Activated CD4-positive, alpha-beta memory T cell treated with anti-CD3 and anti-CD28 coated beads, Interleukin-2, amount 10 ng/mL, durations not matched to agents 7 days and 5 days (primary cell): ENCODE measurements at regions of chr17 and their contacts with region 1.

Region 1: DNA sequence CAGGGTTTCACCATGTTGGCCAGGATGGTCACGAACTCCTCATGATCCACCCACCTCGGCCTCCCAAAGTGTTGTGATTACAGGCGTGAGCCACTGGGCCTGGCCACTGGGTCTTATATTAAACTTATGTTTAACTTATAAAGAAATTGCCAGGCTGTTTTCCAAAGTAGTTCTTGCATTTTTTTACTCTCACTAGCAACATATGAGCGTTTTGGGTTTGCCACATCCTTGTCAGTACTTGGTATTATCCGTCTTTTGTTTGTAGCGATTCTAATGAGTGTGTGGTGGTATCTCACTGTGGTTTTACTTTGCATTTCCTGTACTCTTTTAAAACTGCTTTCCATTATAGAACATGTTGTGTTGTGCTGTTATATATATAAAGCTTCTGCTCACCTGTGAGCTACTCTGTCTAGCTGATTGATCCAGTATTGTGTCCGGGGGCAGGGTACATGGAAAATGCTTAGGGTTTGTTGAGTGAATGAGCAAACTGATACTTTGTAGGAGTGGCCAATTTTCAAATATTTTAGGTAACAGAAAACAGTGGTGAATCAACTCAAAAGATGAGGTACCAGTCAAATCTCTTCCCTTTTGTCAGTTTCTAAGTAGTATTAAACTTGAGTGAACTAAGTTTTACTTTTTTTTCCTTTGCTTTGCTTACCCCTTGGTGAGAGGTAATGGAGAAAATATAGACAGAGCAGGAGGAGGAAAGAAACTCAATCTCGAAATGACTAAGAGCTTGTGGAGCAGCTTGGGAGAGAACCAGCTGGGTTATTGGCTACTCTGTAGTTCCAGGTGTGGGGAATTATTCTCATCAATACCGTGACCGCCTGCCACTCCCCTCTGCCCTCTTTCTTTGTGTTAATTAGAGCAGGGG is 75.8 kb downstream of the PITPNC1 start:
- DNase-seq: peak; percentile 39
- H3K4me3 Mint-ChIP-seq: peak overlapping the region; percentile 59
- H3K27ac Mint-ChIP-seq: peak overlapping the region; percentile 95
- H3K4me1 Mint-ChIP-seq: peaks cover 62% of the 10 kb centered on the region
- H3K27me3 Mint-ChIP-seq: peaks cover 2% of the 10 kb centered on the region

Region 2: DNA sequence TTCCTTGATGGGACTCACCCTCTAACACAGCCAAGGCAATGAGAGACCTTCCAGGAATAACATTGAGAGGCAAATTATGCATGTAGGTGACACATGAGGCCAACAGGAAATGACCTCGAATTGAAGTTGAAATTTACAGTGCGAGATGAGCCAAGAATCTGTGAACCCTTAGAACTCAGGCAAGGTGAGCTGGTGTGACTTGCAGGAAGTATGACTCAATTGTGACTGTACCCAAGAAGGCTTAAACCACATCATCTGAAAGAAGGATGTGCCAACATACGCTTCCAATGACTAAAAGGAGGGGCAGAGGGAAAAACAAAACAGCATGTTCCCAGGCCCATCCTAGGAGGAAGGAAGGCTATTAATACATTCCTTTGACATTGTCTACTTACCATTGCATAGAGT is 31.0 kb before region 1 on chr17:
- CTCF ChIA-PET with region 1: interaction called, 3 read pairs
- POLR2A ChIA-PET with region 1: interaction called, 10 read pairs
- DNase-seq: peak; percentile 64
- H3K4me3 Mint-ChIP-seq: no peak overlapping the region
- H3K27ac Mint-ChIP-seq: peak overlapping the region; percentile 83
- H3K4me1 Mint-ChIP-seq: peaks cover 51% of the 10 kb centered on the region
- H3K27me3 Mint-ChIP-seq: no peaks in the 10 kb centered on the region

Region 3: GRCh38 chr17:67431249-67432048 is 21.5 kb before region 1 on chr17:
- CTCF ChIA-PET with region 1: interaction called, 19 read pairs
- POLR2A ChIA-PET with region 1: interaction called, 61 read pairs
- DNase-seq: no peak
- H3K4me3 Mint-ChIP-seq: no peak overlapping the region
- H3K27ac Mint-ChIP-seq: peak overlapping the region; percentile 11
- H3K4me1 Mint-ChIP-seq: peaks cover 55% of the 10 kb centered on the region
- H3K27me3 Mint-ChIP-seq: peaks cover 3% of the 10 kb centered on the region

Region 4: DNA sequence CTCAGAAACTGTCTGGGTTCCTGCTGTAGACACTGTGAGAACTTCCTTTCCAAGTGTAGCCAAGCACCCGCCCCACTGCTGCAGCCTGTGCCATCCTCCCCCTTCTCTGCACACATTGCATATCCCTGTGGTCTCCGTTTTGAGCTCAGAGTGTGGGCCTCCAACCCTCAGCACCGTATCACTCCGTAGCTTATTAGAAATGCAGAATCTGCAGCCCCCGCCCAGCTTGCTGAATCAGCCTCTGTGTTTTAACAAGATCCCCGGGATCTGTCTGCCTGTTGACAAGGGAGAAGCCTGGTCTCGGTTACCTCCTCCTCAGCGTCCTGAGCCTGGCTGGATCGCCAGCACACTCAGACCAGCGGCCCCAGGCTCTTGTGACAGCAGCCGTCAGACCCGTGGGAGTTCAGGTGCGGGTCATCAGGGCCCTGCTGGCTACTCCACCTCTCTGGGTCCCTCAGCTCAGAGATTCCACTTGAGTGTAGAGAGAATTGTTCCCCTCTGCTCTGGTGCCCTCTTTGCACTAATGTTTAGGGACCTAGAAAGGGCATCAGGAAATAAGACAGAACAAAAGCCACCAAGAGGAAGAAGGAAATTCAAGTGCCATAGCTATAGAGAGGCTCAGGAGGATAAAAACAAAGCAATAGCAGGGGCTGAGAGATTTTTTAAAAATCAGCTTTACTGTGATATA is 16.4 kb after region 1 on chr17:
- CTCF ChIA-PET with region 1: interaction called, 9 read pairs
- POLR2A ChIA-PET with region 1: interaction called, 19 read pairs
- DNase-seq: no peak
- H3K4me3 Mint-ChIP-seq: no peak overlapping the region
- H3K27ac Mint-ChIP-seq: no peak overlapping the region
- H3K4me1 Mint-ChIP-seq: peaks cover 28% of the 10 kb centered on the region
- H3K27me3 Mint-ChIP-seq: peaks cover 2% of the 10 kb centered on the region